OCI-LY7 (cell line): ENCODE measurements at regions of chrX and their contacts with region 1.

Region 1: GRCh38 chrX:72181178-72182125 is at the start of gene PIN4:
- DNase-seq: peak; percentile 94
- H3K4me3 ChIP-seq: peak within 1 kb of the TSS; percentile 99
- H3K27ac ChIP-seq: peak within 1 kb of the TSS; percentile 89
- H3K4me1 ChIP-seq: peaks cover 22% of the 10 kb centered on the region
- CTCF ChIP-seq: no peak
- total RNA-seq, gene PIN4: 12.3 and 33.6 TPM in 2 replicates

Region 2: GRCh38 chrX:72094894-72095293 is 86.6 kb before region 1 on chrX:
- CTCF ChIA-PET with region 1: no interaction called
- POLR2A ChIA-PET with region 1: no interaction called
- intact Hi-C with region 1: no loop called
- DNase-seq: no peak
- H3K4me3 ChIP-seq: no peak overlapping the region
- H3K27ac ChIP-seq: no peak overlapping the region
- H3K4me1 ChIP-seq: no peaks in the 10 kb centered on the region
- CTCF ChIP-seq: no peak

Region 3: GRCh38 chrX:72238721-72239475 is 57.4 kb after region 1 on chrX and contains the start of gene ERCC6L:
- CTCF ChIA-PET with region 1: no interaction called
- POLR2A ChIA-PET with region 1: interaction called, 4 read pairs
- intact Hi-C with region 1: loop called (anchors 2 kb)
- DNase-seq: peak; percentile 86
- H3K4me3 ChIP-seq: peak within 1 kb of the TSS; percentile 92
- H3K27ac ChIP-seq: peak within 1 kb of the TSS; percentile 65
- H3K4me1 ChIP-seq: peaks cover 3% of the 10 kb centered on the region
- CTCF ChIP-seq: no peak
- total RNA-seq, gene ERCC6L: 12.6 and 13.5 TPM in 2 replicates

Region 4: GRCh38 chrX:72258174-72258573 is 76.7 kb after region 1 on chrX:
- CTCF ChIA-PET with region 1: no interaction called
- POLR2A ChIA-PET with region 1: no interaction called
- intact Hi-C with region 1: no loop called
- DNase-seq: no peak
- H3K4me3 ChIP-seq: no peak overlapping the region
- H3K27ac ChIP-seq: no peak overlapping the region
- H3K4me1 ChIP-seq: no peaks in the 10 kb centered on the region
- CTCF ChIP-seq: no peak